Activated CD4-positive, alpha-beta memory T cell treated with anti-CD3 and anti-CD28 coated beads, Interleukin-2, amount 10 ng/mL, durations not matched to agents 7 days and 5 days (primary cell): ENCODE measurements at regions of chr16 and their contacts with region 1.

Region 1: GRCh38 chr16:30075507-30076275 is at the start of gene PPP4C:
- DNase-seq: peak; percentile 95
- H3K4me3 Mint-ChIP-seq: peak within 1 kb of the TSS; percentile 97
- H3K27ac Mint-ChIP-seq: peak within 1 kb of the TSS; percentile 92
- H3K4me1 Mint-ChIP-seq: peaks cover 46% of the 10 kb centered on the region
- H3K27me3 Mint-ChIP-seq: no peaks in the 10 kb centered on the region
- total RNA-seq, gene PPP4C: 146 to 147 TPM

Region 2: GRCh38 chr16:30065143-30065850 is 10.4 kb before region 1 on chr16 and contains the start of gene ALDOA:
- CTCF ChIA-PET with region 1: interaction called, 12 read pairs
- POLR2A ChIA-PET with region 1: interaction called, 87 read pairs
- DNase-seq: peak; percentile 97
- H3K4me3 Mint-ChIP-seq: peak within 1 kb of the TSS; percentile 95
- H3K27ac Mint-ChIP-seq: peak within 1 kb of the TSS; percentile 99
- H3K4me1 Mint-ChIP-seq: peaks cover 36% of the 10 kb centered on the region
- H3K27me3 Mint-ChIP-seq: no peaks in the 10 kb centered on the region
- total RNA-seq, gene ALDOA: 1,403 to 1,450 TPM